K562 (cell line): ENCODE measurements at regions of chr22 and their contacts with region 1.

Region 1: DNA sequence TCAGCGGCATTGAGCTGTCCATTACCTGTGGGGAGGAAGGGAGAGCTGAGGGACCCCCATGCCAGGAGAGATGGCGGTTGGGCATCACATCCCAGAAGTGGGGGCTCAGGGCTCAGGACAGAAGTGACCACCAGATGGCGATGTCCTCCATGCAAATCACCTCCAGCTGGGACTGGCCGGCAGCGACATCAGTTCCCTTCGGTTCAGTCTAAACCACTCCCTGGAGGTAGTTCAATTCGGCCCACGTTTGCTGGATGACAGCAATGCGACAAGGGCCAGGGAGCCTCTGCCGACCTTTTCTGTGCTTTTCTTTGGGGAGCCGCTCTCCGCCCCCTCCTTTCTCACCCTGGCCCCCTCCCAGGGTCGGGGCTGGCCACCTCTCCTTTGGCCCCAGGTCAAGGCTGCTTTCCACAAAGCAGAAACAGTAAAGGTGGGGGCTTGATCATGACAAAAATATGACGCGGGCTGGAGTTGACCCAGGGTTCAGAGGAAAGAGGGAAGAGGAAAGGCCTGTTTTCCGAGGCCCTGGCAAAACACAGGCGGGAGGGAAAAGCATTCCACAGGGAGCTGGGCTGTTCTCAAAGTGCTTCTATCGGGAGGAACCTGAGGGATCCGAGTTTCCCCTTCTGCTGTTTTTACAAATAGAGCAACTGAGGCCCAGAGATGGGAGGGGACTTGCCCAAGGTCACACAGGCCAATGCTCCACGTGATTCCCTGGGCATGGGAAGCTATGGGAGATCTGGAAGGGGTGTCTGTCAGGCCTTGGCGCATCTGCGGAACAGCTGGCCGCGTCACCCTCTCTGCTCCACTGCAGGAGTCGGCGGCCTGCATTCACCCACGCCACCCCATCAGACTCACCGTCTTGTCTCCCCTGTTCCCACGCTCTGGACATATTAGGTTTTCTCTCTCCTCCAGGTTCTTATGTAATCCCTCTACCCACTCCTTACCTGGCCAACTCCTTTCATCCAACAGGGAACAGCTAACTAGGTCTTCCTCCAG is 54.7 kb downstream of the FBXO7 start:
- DNase-seq: peak; percentile 74 to 81 (median 75)
- ATAC-seq: peak; percentile 86
- H3K4me3 ChIP-seq: no peak overlapping the region
- H3K27ac ChIP-seq: no peak overlapping the region
- H3K4me1 ChIP-seq: peaks cover 18 to 24% of the 10 kb centered on the region in 2 experiments
- H3K27me3 ChIP-seq: no peaks in the 10 kb centered on the region; a peak in 1 of 5 replicates
- CTCF ChIP-seq: peak; percentile 79 to 80 (median 79)
- EP300 ChIP-seq: no peak
- POLR2A ChIP-seq: no peak
- RAD21 ChIP-seq: peak; percentile 80 to 92

Region 2: GRCh38 chr22:32518848-32519247 is 10.4 kb before region 1 on chr22:
- CTCF ChIA-PET with region 1: no interaction called
- POLR2A ChIA-PET with region 1: no interaction called
- in situ Hi-C with region 1: no loop called
- intact Hi-C with region 1: no loop called
- DNase-seq: peak in 3 of 4 experiments; percentile 25 to 42 (median 29)
- ATAC-seq: peak; percentile 71
- H3K4me3 ChIP-seq: no peak overlapping the region
- H3K27ac ChIP-seq: no peak overlapping the region
- H3K4me1 ChIP-seq: no peaks in the 10 kb centered on the region
- H3K27me3 ChIP-seq: no peaks in the 10 kb centered on the region; a peak in 1 of 5 replicates
- CTCF ChIP-seq: peak; percentile 20 to 45 (median 41); a peak in 5 of 6 replicates
- EP300 ChIP-seq: no peak
- POLR2A ChIP-seq: no peak
- RAD21 ChIP-seq: peak in 1 of 2 experiments; percentile 43; a peak in 2 of 4 replicates

Region 3: GRCh38 chr22:32660292-32660691 is 131.0 kb after region 1 on chr22:
- CTCF ChIA-PET with region 1: interaction called, 3 read pairs
- POLR2A ChIA-PET with region 1: no interaction called
- in situ Hi-C with region 1: no loop called
- intact Hi-C with region 1: loop called (anchors 5 kb)
- DNase-seq: peak; percentile 63 to 69 (median 68)
- ATAC-seq: peak; percentile 88
- H3K4me3 ChIP-seq: no peak overlapping the region
- H3K27ac ChIP-seq: no peak overlapping the region
- H3K4me1 ChIP-seq: no peaks in the 10 kb centered on the region; a peak in 1 of 5 replicates
- H3K27me3 ChIP-seq: peaks cover 0 to 9% of the 10 kb centered on the region in 2 experiments; a peak in 4 of 5 replicates
- CTCF ChIP-seq: peak; percentile 76 to 80 (median 76)
- EP300 ChIP-seq: no peak
- POLR2A ChIP-seq: no peak
- RAD21 ChIP-seq: peak; percentile 82 to 86

Region 4: GRCh38 chr22:32796865-32797573 is 267.7 kb after region 1 on chr22:
- CTCF ChIA-PET with region 1: interaction called, 11 read pairs
- POLR2A ChIA-PET with region 1: interaction called, 3 read pairs
- in situ Hi-C with region 1: loop called (anchors 5 kb)
- intact Hi-C with region 1: loop called (anchors 1 kb)
- DNase-seq: peak; percentile 54 to 65 (median 64)
- ATAC-seq: peak; percentile 97
- H3K4me3 ChIP-seq: no peak overlapping the region
- H3K27ac ChIP-seq: no peak overlapping the region
- H3K4me1 ChIP-seq: peaks cover 0 to 12% of the 10 kb centered on the region in 2 experiments; a peak in 2 of 5 replicates
- H3K27me3 ChIP-seq: peaks cover 4 to 13% of the 10 kb centered on the region in 2 experiments; a peak in 3 of 5 replicates
- CTCF ChIP-seq: peak; percentile 75 to 85 (median 79)
- EP300 ChIP-seq: no peak
- POLR2A ChIP-seq: no peak
- RAD21 ChIP-seq: peak; percentile 79 to 84

Region 5: GRCh38 chr22:32985899-32986765 is 456.8 kb after region 1 on chr22:
- CTCF ChIA-PET with region 1: interaction called, 3 read pairs
- POLR2A ChIA-PET with region 1: no interaction called
- in situ Hi-C with region 1: loop called (anchors 10 kb)
- intact Hi-C with region 1: loop called (anchors 5 kb)
- DNase-seq: peak; percentile 67 to 70 (median 67)
- ATAC-seq: peak; percentile 99
- H3K4me3 ChIP-seq: no peak overlapping the region
- H3K27ac ChIP-seq: no peak overlapping the region
- H3K4me1 ChIP-seq: peaks cover 0 to 4% of the 10 kb centered on the region in 2 experiments; a peak in 1 of 5 replicates
- H3K27me3 ChIP-seq: no peaks in the 10 kb centered on the region
- CTCF ChIP-seq: peak; percentile 77 to 79 (median 78)
- EP300 ChIP-seq: no peak
- POLR2A ChIP-seq: no peak
- RAD21 ChIP-seq: peak; percentile 63 to 82

Region 6: GRCh38 chr22:32991353-32992121 is 462.3 kb after region 1 on chr22:
- CTCF ChIA-PET with region 1: no interaction called
- POLR2A ChIA-PET with region 1: no interaction called
- in situ Hi-C with region 1: loop called (anchors 10 kb)
- intact Hi-C with region 1: loop called (anchors 5 kb)
- DNase-seq: no peak
- ATAC-seq: no peak
- H3K4me3 ChIP-seq: no peak overlapping the region
- H3K27ac ChIP-seq: no peak overlapping the region
- H3K4me1 ChIP-seq: no peaks in the 10 kb centered on the region
- H3K27me3 ChIP-seq: peaks cover 0 to under 1% of the 10 kb centered on the region in 2 experiments; a peak in 3 of 5 replicates
- CTCF ChIP-seq: no peak
- EP300 ChIP-seq: no peak
- POLR2A ChIP-seq: no peak
- RAD21 ChIP-seq: no peak

Region 7: DNA sequence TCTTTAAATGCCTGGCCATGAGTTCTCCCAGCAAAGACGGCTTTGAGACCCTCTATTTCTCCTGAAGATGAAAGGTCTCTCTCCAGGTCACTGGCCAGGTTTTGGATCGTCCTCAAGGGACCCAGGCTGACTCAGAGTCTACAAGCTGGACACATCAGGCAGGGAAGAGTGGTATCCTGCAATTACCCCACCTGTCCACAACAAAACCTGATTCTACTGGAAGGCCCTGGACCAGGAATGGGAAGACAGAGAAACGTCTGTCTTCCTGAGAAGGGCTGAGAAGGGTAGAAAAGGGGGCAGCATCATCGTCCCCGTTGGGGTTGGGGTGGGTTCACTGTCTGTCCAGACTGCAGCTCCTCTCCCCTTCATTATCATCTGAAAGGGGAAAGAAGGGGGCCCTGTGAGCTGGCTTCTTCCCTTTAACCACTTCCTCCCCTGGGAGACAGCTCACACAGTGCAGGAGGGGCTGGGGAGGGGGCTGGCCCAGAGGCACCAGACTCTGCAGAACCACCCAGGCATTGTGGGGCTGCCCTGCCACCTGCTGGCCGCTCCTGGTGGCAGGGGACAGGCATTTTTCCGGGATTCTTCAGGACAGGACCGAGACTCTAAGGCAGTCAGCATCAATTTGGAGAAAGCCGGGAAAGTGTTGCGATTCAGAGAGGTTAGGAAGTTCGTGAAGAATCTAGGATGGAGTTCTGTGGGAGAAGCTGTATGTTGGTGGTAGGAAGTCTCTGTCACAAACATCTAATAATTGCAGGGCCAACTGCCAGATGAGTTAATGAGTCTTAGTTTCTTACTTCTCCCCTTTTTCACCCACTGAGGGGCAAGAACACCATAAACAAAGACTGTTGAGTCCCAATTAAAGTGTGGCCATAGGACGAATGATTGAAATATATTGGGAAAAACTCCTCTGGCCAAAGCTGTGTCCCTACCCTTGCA is 471.3 kb after region 1 on chr22:
- CTCF ChIA-PET with region 1: interaction called, 4 read pairs
- POLR2A ChIA-PET with region 1: no interaction called
- in situ Hi-C with region 1: loop called (anchors 10 kb)
- intact Hi-C with region 1: loop called (anchors 5 kb)
- DNase-seq: peak; percentile 37 to 56 (median 51)
- ATAC-seq: peak; percentile 91
- H3K4me3 ChIP-seq: no peak overlapping the region
- H3K27ac ChIP-seq: no peak overlapping the region
- H3K4me1 ChIP-seq: no peaks in the 10 kb centered on the region
- H3K27me3 ChIP-seq: peaks cover 0 to 8% of the 10 kb centered on the region in 2 experiments; a peak in 2 of 5 replicates
- CTCF ChIP-seq: peak; percentile 71 to 78 (median 75)
- EP300 ChIP-seq: no peak
- POLR2A ChIP-seq: no peak
- RAD21 ChIP-seq: peak; percentile 67 to 82

Region 8: GRCh38 chr22:33209930-33210784 is 680.9 kb after region 1 on chr22:
- CTCF ChIA-PET with region 1: no interaction called
- POLR2A ChIA-PET with region 1: no interaction called
- in situ Hi-C with region 1: loop called (anchors 25 kb)
- intact Hi-C with region 1: no loop called
- DNase-seq: peak; percentile 13 to 44 (median 28)
- ATAC-seq: peak; percentile 87
- H3K4me3 ChIP-seq: no peak overlapping the region
- H3K27ac ChIP-seq: no peak overlapping the region
- H3K4me1 ChIP-seq: no peaks in the 10 kb centered on the region; a peak in 1 of 5 replicates
- H3K27me3 ChIP-seq: peaks cover 2 to 6% of the 10 kb centered on the region in 2 experiments; a peak in 2 of 5 replicates
- CTCF ChIP-seq: peak; percentile 46 to 55 (median 50); a peak in 5 of 6 replicates
- EP300 ChIP-seq: no peak
- POLR2A ChIP-seq: no peak
- RAD21 ChIP-seq: peak in 1 of 2 experiments; percentile 46; a peak in 2 of 4 replicates